Activated B cell treated with CpG ODN at 0.5 μM for 24 hours (primary cell): ENCODE measurements at regions of chr7 and their contacts with region 1.

Region 1: GRCh38 chr7:37833107-37833817 is 15.1 kb upstream of the NME8 start:
- DNase-seq: peak; percentile 23
- ATAC-seq: peak; percentile 71
- H3K4me3 Mint-ChIP-seq: peak overlapping the region; percentile 81
- H3K27ac Mint-ChIP-seq: no peak overlapping the region
- H3K4me1 Mint-ChIP-seq: peaks cover 15% of the 10 kb centered on the region
- H3K27me3 Mint-ChIP-seq: no peaks in the 10 kb centered on the region
- CTCF ChIP-seq: peak; percentile 87

Region 2: DNA sequence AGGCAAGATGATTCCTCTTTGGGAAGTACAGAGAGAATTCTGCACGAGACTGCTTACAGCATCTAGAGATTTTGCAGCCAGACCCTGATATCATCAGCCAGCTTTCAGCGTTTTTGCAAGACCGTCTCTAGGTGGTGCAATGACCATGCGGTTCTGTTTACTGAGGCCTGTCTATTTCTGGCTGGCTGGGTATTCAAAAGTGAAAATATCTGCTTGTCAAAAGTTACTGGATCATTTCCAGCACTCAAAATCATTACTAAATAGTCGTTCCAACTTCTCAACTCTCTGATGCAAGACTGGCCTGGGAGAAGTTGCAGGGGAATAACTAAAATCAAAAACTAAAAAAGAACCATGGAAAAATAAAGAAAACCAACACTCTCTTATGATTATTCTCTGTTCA is 624.7 kb before region 1 on chr7:
- CTCF ChIA-PET with region 1: interaction called, 4 read pairs
- POLR2A ChIA-PET with region 1: no interaction called
- intact Hi-C with region 1: loop called (anchors 1 kb)
- DNase-seq: no peak
- ATAC-seq: peak; percentile 75
- H3K4me3 Mint-ChIP-seq: no peak overlapping the region
- H3K27ac Mint-ChIP-seq: peak overlapping the region; percentile 10
- H3K4me1 Mint-ChIP-seq: peaks cover 11% of the 10 kb centered on the region
- H3K27me3 Mint-ChIP-seq: no peaks in the 10 kb centered on the region
- CTCF ChIP-seq: no peak

Region 3: DNA sequence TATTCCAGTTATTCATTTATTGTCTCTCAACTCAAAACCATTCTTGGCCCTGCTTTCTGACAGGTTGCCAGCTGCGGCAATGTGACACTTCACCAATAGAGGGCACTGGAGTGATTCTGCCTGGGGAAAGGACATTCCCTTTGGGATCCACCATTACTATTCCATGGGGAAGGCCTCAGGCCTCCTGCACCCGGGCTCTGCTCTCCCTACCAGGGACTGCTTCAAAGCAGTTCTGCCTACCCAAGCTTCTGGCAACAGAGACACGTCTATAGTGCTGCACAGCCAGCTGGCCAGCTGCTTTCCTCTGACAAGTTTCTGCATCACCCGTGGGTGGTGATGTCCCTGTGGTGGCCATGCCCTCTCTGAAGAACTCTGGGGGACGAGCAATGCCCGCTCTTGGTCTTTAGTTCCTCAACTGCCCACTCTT is 548.4 kb before region 1 on chr7:
- CTCF ChIA-PET with region 1: interaction called, 12 read pairs
- POLR2A ChIA-PET with region 1: no interaction called
- intact Hi-C with region 1: loop called (anchors 10 kb)
- DNase-seq: peak; percentile 25
- ATAC-seq: no peak
- H3K4me3 Mint-ChIP-seq: no peak overlapping the region
- H3K27ac Mint-ChIP-seq: no peak overlapping the region
- H3K4me1 Mint-ChIP-seq: peaks cover 50% of the 10 kb centered on the region
- H3K27me3 Mint-ChIP-seq: no peaks in the 10 kb centered on the region
- CTCF ChIP-seq: peak; percentile 33

Region 4: GRCh38 chr7:37510043-37510634 is 323.1 kb before region 1 on chr7:
- CTCF ChIA-PET with region 1: interaction called, 16 read pairs
- POLR2A ChIA-PET with region 1: no interaction called
- intact Hi-C with region 1: loop called (anchors 1 kb)
- DNase-seq: no peak
- ATAC-seq: peak; percentile 60
- H3K4me3 Mint-ChIP-seq: no peak overlapping the region
- H3K27ac Mint-ChIP-seq: no peak overlapping the region
- H3K4me1 Mint-ChIP-seq: no peaks in the 10 kb centered on the region
- H3K27me3 Mint-ChIP-seq: peaks cover 14% of the 10 kb centered on the region
- CTCF ChIP-seq: no peak

Region 5: GRCh38 chr7:37759526-37759925 is 73.7 kb before region 1 on chr7:
- CTCF ChIA-PET with region 1: no interaction called
- POLR2A ChIA-PET with region 1: no interaction called
- intact Hi-C with region 1: loop called (anchors 5 kb)
- DNase-seq: no peak
- ATAC-seq: no peak
- H3K4me3 Mint-ChIP-seq: no peak overlapping the region
- H3K27ac Mint-ChIP-seq: no peak overlapping the region
- H3K4me1 Mint-ChIP-seq: no peaks in the 10 kb centered on the region
- H3K27me3 Mint-ChIP-seq: no peaks in the 10 kb centered on the region
- CTCF ChIP-seq: no peak